ENCODE measurements at regions of chrX and their contacts with region 1.

Region 1: DNA sequence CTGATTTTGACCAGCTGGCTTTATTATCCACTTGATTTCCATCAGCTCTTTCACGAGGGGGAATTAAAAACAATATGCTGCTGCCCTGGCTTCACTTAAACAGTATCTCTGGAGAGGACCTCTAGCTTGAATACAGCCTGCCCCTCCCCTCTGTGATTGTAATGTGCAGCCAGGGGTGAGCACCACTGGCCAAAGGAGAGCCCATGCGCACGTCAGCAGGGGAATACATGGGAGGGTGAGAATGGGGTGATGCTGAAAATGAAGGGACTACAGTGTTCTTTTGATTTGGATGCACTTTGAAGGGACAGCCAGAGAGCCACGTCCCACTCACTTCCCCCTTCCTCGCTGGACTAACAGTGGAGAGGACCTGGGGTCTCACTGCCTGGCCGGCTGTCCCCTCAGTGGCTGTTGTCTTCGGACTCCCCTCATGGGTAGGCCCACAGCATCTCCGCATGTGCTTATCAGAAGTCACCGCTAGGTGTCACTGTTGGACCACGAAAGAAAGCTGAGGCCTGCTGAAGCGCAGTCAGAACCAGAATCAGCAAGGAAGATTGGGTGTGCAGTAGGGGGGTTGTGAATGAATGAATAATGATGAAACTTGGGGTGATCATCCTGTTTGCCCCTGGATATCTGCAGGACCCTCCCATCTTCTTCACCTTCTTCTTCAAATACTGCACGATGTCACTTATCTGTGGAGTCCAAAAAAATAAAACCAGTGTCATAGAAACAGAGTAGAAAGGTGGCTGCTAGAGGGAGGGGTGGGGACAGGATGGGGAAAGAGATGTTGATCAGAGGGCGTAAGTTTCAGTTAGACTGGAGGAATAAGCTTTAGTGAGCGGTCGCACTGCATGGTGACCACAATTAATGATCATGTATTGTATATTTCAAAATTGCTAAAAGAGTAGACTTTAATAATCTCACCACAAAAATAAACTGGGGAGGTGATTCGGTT is 32.8 kb downstream of the CLCN4 start:
- DNase-seq: peak; percentile 49
- H3K4me3 ChIP-seq: no peak overlapping the region
- H3K27ac ChIP-seq: no peak overlapping the region
- H3K4me1 ChIP-seq: no peaks in the 10 kb centered on the region
- H3K27me3 ChIP-seq: no peaks in the 10 kb centered on the region
- CTCF ChIP-seq: peak; percentile 23 to 75 (median 70)
- POLR2A ChIP-seq: no peak

Region 2: DNA sequence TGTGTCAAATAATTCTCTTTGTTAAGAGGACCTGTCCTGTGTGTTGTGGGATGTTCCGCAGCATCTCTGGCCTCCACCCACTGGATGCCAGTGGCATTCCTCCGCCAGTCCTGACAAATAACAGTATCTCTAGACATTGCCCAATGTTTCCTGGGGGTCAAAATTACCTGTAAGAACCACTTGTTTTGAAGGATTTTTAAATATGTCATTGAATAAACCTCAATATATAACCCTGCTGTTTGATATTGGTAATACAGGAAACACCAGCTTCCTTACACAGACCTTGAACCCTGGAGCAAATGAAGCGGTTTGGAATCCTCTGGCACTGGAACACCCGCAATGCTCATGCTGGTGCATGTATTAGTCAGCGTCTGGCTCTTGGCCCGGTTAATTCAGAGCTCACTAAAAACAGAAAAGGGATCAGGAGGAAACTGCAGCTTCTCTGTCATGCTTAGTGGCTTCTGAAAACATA is 623.4 kb before region 1 on chrX:
- intact Hi-C with region 1: no loop called
- DNase-seq: peak; percentile 34
- H3K4me3 ChIP-seq: no peak overlapping the region
- H3K27ac ChIP-seq: no peak overlapping the region
- H3K4me1 ChIP-seq: no peaks in the 10 kb centered on the region
- H3K27me3 ChIP-seq: no peaks in the 10 kb centered on the region
- CTCF ChIP-seq: no peak
- POLR2A ChIP-seq: no peak

Region 3: GRCh38 chrX:10052906-10053625 is 136.5 kb before region 1 on chrX:
- intact Hi-C with region 1: no loop called
- DNase-seq: no peak
- H3K4me3 ChIP-seq: no peak overlapping the region
- H3K27ac ChIP-seq: peak overlapping the region; percentile 8 to 27
- H3K4me1 ChIP-seq: no peaks in the 10 kb centered on the region
- H3K27me3 ChIP-seq: no peaks in the 10 kb centered on the region
- CTCF ChIP-seq: no peak
- POLR2A ChIP-seq: no peak

Region 4: DNA sequence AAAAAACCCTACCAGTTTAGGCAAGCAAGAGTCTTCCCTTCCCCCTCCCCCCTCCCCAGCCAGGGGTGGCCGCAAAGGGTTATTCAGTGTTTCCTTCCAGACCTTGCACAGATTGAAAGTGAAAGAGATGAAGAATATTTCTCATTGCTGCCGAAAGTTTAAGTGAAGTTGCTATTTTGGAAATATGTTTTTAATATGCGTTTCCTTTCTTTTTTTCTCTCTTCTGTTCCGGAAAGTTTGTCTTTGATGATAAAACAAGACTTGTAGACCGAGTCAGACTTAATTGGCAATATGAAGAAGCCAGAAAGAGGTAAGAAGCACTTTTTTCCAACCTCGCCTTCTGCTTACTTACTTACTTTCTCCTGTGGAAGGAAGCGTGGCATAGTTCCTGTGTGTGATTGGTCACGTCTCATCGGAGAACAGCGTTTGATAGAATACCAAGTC is 91.3 kb before region 1 on chrX:
- intact Hi-C with region 1: no loop called
- DNase-seq: no peak
- H3K4me3 ChIP-seq: no peak overlapping the region
- H3K27ac ChIP-seq: no peak overlapping the region
- H3K4me1 ChIP-seq: no peaks in the 10 kb centered on the region
- H3K27me3 ChIP-seq: no peaks in the 10 kb centered on the region
- CTCF ChIP-seq: no peak
- POLR2A ChIP-seq: no peak

Region 5: GRCh38 chrX:10156199-10157031 is 33.2 kb before region 1 on chrX and contains the start of gene CLCN4:
- intact Hi-C with region 1: no loop called
- DNase-seq: peak; percentile 9
- H3K4me3 ChIP-seq: peak within 1 kb of the TSS in 1 of 2 donors; percentile 11
- H3K27ac ChIP-seq: peak within 1 kb of the TSS in 1 of 2 donors; percentile 19
- H3K4me1 ChIP-seq: no peaks in the 10 kb centered on the region
- H3K27me3 ChIP-seq: no peaks in the 10 kb centered on the region
- CTCF ChIP-seq: no peak
- POLR2A ChIP-seq: no peak
- total RNA-seq, gene CLCN4: 0.50 to 15.3 TPM

Region 6: GRCh38 chrX:10615931-10616775 is 426.6 kb after region 1 on chrX:
- intact Hi-C with region 1: loop called (anchors 10 kb)
- DNase-seq: peak; percentile 34
- H3K4me3 ChIP-seq: no peak overlapping the region
- H3K27ac ChIP-seq: no peak overlapping the region
- H3K4me1 ChIP-seq: no peaks in the 10 kb centered on the region
- H3K27me3 ChIP-seq: no peaks in the 10 kb centered on the region
- CTCF ChIP-seq: peak; percentile 24 to 57 (median 44)
- POLR2A ChIP-seq: no peak

Region 7: GRCh38 chrX:10722851-10723250 is 533.3 kb after region 1 on chrX:
- intact Hi-C with region 1: loop called (anchors 5 kb)
- DNase-seq: peak; percentile 38
- H3K4me3 ChIP-seq: no peak overlapping the region
- H3K27ac ChIP-seq: no peak overlapping the region
- H3K4me1 ChIP-seq: no peaks in the 10 kb centered on the region
- H3K27me3 ChIP-seq: no peaks in the 10 kb centered on the region
- CTCF ChIP-seq: peak; percentile 23 to 61 (median 52)
- POLR2A ChIP-seq: no peak

Region 8: GRCh38 chrX:11137543-11138139 is 948.0 kb after region 1 on chrX:
- intact Hi-C with region 1: loop called (anchors 2 kb)
- DNase-seq: peak; percentile 11
- H3K4me3 ChIP-seq: no peak overlapping the region
- H3K27ac ChIP-seq: no peak overlapping the region
- H3K4me1 ChIP-seq: no peaks in the 10 kb centered on the region
- H3K27me3 ChIP-seq: no peaks in the 10 kb centered on the region
- CTCF ChIP-seq: peak; percentile 37 to 71 (median 62)
- POLR2A ChIP-seq: no peak

Region 9: GRCh38 chrX:11759461-11760311 is 1570.1 kb after region 1 on chrX:
- intact Hi-C with region 1: loop called (anchors 10 kb)
- DNase-seq: peak; percentile 86
- H3K4me3 ChIP-seq: peak overlapping the region; percentile 46 to 51
- H3K27ac ChIP-seq: peak overlapping the region; percentile 57 to 80
- H3K4me1 ChIP-seq: no peaks in the 10 kb centered on the region
- H3K27me3 ChIP-seq: no peaks in the 10 kb centered on the region
- CTCF ChIP-seq: peak in 1 of 4 experiments; percentile 27
- POLR2A ChIP-seq: no peak

Measured in prostate gland (tissue), 2 donors.